ENCODE measurements at regions of chr14 and their contacts with region 1.

Region 1: GRCh38 chr14:99575043-99576023 is 28.7 kb downstream of the CCDC85C start:
- DNase-seq: peak; percentile 34 to 46
- H3K4me3 ChIP-seq: no peak overlapping the region
- H3K4me3 Mint-ChIP-seq: peak overlapping the region; percentile 61
- H3K27ac Mint-ChIP-seq: peak overlapping the region; percentile 90
- H3K4me1 ChIP-seq: peaks cover 79% of the 10 kb centered on the region
- H3K4me1 Mint-ChIP-seq: peaks cover 65% of the 10 kb centered on the region
- H3K27me3 ChIP-seq: no peaks in the 10 kb centered on the region
- H3K27me3 Mint-ChIP-seq: no peaks in the 10 kb centered on the region
- CTCF ChIP-seq: peak in 1 of 2 experiments; percentile 40

Region 2: DNA sequence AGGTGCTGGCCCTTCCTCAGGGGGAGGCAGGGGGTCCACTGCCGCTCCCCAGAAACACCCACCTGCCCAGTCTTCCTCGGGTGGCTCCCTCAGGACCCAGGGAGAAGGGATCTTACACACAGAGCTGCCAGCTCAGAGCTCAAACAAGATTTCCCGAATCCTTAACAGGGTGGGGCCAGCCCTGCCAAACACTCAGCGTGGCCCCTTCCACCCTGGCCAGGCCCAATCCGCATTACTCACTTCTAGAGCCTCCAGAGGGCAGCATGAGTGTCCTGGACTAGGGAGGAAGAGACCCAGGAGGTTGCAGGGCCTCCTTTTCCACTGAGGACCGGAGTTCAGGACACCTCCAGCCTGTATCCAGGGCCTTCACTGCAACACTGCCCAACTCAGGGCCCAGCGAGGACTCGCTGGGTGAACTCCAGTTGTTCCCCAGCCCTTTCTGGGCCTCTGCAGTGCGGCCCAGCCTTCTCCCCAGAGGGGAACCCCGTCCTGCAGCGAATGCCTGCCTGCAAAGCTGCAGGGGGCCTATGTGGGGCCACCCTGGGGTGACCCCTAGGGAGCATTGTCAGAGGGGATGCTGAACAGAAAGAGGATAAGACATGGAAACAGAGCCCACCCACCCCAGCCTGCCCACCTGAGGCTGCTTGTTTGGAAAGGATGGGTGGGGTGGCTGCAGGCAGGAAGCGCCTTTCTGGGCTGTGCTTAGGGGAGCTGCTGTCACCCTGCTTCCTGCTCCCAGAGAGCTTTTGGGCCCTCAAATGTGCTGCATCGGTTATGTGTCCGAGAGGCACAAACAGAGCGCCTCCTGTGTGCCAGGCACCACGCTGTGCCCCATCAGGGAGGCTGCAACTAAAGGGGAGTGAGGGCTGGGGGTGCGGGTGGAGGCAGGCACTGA is 50.3 kb before region 1 on chr14:
- CTCF ChIA-PET with region 1: interaction called, 6 read pairs
- POLR2A ChIA-PET with region 1: no interaction called
- intact Hi-C with region 1: loop called (anchors 1 kb)
- DNase-seq: peak; percentile 62 to 69
- H3K4me3 ChIP-seq: no peak overlapping the region
- H3K4me3 Mint-ChIP-seq: no peak overlapping the region
- H3K27ac Mint-ChIP-seq: peak overlapping the region; percentile 84
- H3K4me1 ChIP-seq: peaks cover 47% of the 10 kb centered on the region
- H3K4me1 Mint-ChIP-seq: peaks cover 8% of the 10 kb centered on the region
- H3K27me3 ChIP-seq: no peaks in the 10 kb centered on the region
- H3K27me3 Mint-ChIP-seq: no peaks in the 10 kb centered on the region
- CTCF ChIP-seq: peak; percentile 23 to 28

Region 3: GRCh38 chr14:99537399-99537798 is 37.9 kb before region 1 on chr14:
- CTCF ChIA-PET with region 1: interaction called, 4 read pairs
- POLR2A ChIA-PET with region 1: no interaction called
- intact Hi-C with region 1: loop called (anchors 5 kb)
- DNase-seq: peak; percentile 49 to 52
- H3K4me3 ChIP-seq: no peak overlapping the region
- H3K4me3 Mint-ChIP-seq: no peak overlapping the region
- H3K27ac Mint-ChIP-seq: peak overlapping the region; percentile 71
- H3K4me1 ChIP-seq: peaks cover 22% of the 10 kb centered on the region
- H3K4me1 Mint-ChIP-seq: peaks cover 5% of the 10 kb centered on the region
- H3K27me3 ChIP-seq: no peaks in the 10 kb centered on the region
- H3K27me3 Mint-ChIP-seq: no peaks in the 10 kb centered on the region
- CTCF ChIP-seq: no peak

Region 4: DNA sequence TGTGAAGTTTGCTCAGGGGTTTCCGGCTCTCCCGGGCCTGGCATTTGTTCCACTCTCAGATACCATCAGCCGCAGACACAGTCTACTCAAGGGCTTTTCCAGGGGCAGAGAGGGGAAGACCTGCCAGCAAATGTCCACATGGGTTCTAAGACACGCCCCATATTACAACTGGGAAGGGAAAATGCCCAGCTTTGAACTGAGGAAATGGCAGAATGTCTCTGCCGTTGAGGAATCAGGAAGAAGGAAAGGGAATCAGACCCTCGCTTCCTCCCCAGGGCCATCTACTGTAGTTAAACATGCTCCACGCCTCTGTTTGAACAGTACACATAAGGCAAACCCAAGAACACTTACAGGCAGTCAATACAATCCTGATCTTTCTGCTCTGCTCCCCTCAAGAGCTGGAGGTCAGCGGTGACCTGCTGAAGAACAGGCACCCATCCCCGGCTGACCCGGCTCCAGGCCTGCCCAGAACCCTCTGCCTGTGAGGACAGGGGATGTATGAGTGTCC is 20.8 kb after region 1 on chr14:
- CTCF ChIA-PET with region 1: interaction called, 3 read pairs
- POLR2A ChIA-PET with region 1: interaction called, 3 read pairs
- intact Hi-C with region 1: loop called (anchors 1 kb)
- DNase-seq: peak; percentile 26 to 52
- H3K4me3 ChIP-seq: no peak overlapping the region
- H3K4me3 Mint-ChIP-seq: no peak overlapping the region
- H3K27ac Mint-ChIP-seq: peak overlapping the region; percentile 85
- H3K4me1 ChIP-seq: peaks cover 55% of the 10 kb centered on the region
- H3K4me1 Mint-ChIP-seq: peaks cover 64% of the 10 kb centered on the region
- H3K27me3 ChIP-seq: no peaks in the 10 kb centered on the region
- H3K27me3 Mint-ChIP-seq: no peaks in the 10 kb centered on the region
- CTCF ChIP-seq: no peak

Region 5: GRCh38 chr14:99621960-99622671 is 46.8 kb after region 1 on chr14:
- CTCF ChIA-PET with region 1: no interaction called
- POLR2A ChIA-PET with region 1: no interaction called
- intact Hi-C with region 1: loop called (anchors 2 kb)
- DNase-seq: peak in 1 of 2 experiments; percentile 57
- H3K4me3 ChIP-seq: no peak overlapping the region
- H3K4me3 Mint-ChIP-seq: no peak overlapping the region
- H3K27ac Mint-ChIP-seq: peak overlapping the region; percentile 42
- H3K4me1 ChIP-seq: peaks cover 10% of the 10 kb centered on the region
- H3K4me1 Mint-ChIP-seq: peaks cover 11% of the 10 kb centered on the region
- H3K27me3 ChIP-seq: no peaks in the 10 kb centered on the region
- H3K27me3 Mint-ChIP-seq: no peaks in the 10 kb centered on the region
- CTCF ChIP-seq: no peak

Region 6: DNA sequence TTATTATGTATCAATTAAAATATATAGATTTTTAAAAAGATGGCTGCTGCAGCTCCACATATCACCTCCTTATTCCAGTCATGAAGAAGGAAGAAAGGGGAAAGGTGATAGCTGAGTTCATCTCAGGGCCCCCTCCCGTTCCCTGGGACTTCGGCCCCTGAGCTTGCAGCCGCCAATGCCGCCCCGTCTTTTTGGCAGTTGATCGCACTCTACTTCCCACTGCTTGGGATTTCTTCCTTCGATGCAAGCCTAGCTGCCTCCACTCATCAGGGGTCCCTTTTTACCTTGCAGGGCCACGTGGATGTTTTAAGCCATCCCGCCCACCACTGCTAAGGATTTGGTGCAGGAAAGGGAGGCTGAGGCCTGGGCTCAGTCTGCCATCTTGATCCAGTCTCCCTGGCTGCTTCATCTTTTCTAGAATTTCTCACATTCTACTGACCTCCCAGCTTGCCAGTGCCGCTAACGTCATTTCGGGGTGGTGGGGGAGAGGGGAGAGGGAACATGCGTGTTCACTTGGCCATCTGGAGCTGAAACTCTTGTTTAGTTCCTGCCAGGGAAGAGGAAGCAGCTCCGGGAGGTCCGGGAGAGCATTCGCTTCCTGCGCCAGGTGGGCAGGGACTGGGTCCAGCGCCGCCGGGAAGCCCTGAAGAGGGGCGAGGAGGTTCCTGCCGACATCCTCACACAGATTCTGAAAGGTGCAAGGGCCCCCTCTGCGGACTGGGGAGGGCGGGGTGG is 140.1 kb after region 1 on chr14:
- CTCF ChIA-PET with region 1: no interaction called
- POLR2A ChIA-PET with region 1: no interaction called
- intact Hi-C with region 1: no loop called
- DNase-seq: no peak
- H3K4me3 ChIP-seq: no peak overlapping the region
- H3K4me3 Mint-ChIP-seq: no peak overlapping the region
- H3K27ac Mint-ChIP-seq: no peak overlapping the region
- H3K4me1 ChIP-seq: no peaks in the 10 kb centered on the region
- H3K4me1 Mint-ChIP-seq: no peaks in the 10 kb centered on the region
- H3K27me3 ChIP-seq: no peaks in the 10 kb centered on the region
- H3K27me3 Mint-ChIP-seq: peaks cover 12% of the 10 kb centered on the region
- CTCF ChIP-seq: no peak